OCI-LY7 (cell line): ENCODE measurements at regions of chr18 and their contacts with region 1.

Region 1: GRCh38 chr18:55422456-55423180 is 165.4 kb downstream of the TCF4 start:
- DNase-seq: peak; percentile 67
- H3K4me3 ChIP-seq: peak overlapping the region; percentile 72
- H3K27ac ChIP-seq: peak overlapping the region; percentile 100
- H3K4me1 ChIP-seq: peaks cover 66% of the 10 kb centered on the region
- CTCF ChIP-seq: no peak

Region 2: DNA sequence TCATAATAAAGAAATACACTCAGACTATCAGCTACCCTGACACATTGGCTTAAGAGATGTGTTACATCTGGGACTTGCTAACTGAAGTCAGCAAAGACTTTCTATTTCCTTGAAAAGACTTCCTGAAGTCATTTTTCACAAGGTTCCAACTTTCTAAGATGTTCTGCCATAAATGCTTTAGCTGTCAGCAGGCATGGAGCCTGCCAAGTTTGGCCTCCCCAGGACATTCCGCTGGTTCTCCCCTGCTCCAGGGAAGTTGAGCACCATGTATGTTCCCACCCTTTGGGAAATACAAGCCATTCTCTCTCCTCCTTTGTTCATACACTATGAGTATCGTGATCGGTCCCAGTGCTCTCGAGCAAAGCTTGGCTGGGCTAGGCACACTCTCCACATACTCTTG is 260.7 kb before region 1 on chr18:
- CTCF ChIA-PET with region 1: no interaction called
- POLR2A ChIA-PET with region 1: no interaction called
- intact Hi-C with region 1: no loop called
- DNase-seq: no peak
- H3K4me3 ChIP-seq: no peak overlapping the region
- H3K27ac ChIP-seq: no peak overlapping the region
- H3K4me1 ChIP-seq: no peaks in the 10 kb centered on the region
- CTCF ChIP-seq: no peak

Region 3: GRCh38 chr18:55439056-55439455 is 16.4 kb after region 1 on chr18:
- CTCF ChIA-PET with region 1: interaction called, 10 read pairs
- POLR2A ChIA-PET with region 1: interaction called, 41 read pairs
- intact Hi-C with region 1: no loop called
- DNase-seq: no peak
- H3K4me3 ChIP-seq: no peak overlapping the region
- H3K27ac ChIP-seq: no peak overlapping the region
- H3K4me1 ChIP-seq: peaks cover 93% of the 10 kb centered on the region
- CTCF ChIP-seq: no peak

Region 4: GRCh38 chr18:55447672-55448018 is 25.0 kb after region 1 on chr18:
- CTCF ChIA-PET with region 1: interaction called, 10 read pairs
- POLR2A ChIA-PET with region 1: interaction called, 58 read pairs
- intact Hi-C with region 1: loop called (anchors 1 kb)
- DNase-seq: peak; percentile 30
- H3K4me3 ChIP-seq: peak overlapping the region; percentile 40
- H3K27ac ChIP-seq: peak overlapping the region; percentile 98
- H3K4me1 ChIP-seq: peaks cover 91% of the 10 kb centered on the region
- CTCF ChIP-seq: no peak

Region 5: GRCh38 chr18:55465313-55465712 is 42.7 kb after region 1 on chr18:
- CTCF ChIA-PET with region 1: no interaction called
- POLR2A ChIA-PET with region 1: interaction called, 3 read pairs
- intact Hi-C with region 1: loop called (anchors 5 kb)
- DNase-seq: peak; percentile 74
- H3K4me3 ChIP-seq: peak overlapping the region; percentile 46
- H3K27ac ChIP-seq: peak overlapping the region; percentile 77
- H3K4me1 ChIP-seq: peaks cover 50% of the 10 kb centered on the region
- CTCF ChIP-seq: no peak

Region 6: DNA sequence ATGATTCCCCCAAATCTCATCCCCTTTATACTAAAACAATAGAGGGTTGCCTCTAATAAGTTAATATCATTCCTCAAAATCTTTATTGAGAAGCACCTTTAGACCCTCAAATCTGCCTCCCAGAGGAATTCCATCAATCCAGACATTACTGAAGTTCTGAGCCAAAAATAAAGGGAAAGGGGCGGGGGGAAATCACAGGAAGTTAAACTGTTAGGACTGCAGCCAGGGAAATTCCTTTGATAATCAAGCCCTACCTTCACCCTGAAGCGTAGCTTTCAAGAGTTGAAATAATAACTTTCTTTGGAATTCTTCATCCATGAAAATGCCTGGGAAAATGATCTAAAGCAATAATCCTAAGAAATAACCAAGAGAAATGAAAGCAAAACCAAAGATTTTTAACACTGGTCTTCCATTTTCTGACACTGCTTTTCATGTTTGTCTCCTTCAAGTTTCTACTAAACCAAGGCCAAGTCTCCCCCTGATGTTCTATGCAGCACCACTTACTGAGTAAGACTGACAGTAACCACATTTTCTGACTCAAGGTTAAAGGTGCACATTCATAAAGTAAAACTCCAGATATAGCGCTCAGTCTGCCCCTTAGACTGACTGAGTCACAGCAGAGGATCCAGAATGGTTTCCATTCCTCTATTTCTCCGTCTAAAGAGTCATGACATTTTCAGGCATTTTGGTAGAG is 87.2 kb after region 1 on chr18:
- CTCF ChIA-PET with region 1: no interaction called
- POLR2A ChIA-PET with region 1: interaction called, 5 read pairs
- intact Hi-C with region 1: loop called (anchors 2 kb)
- DNase-seq: peak; percentile 53
- H3K4me3 ChIP-seq: peak overlapping the region; percentile 63
- H3K27ac ChIP-seq: peak overlapping the region; percentile 81
- H3K4me1 ChIP-seq: peaks cover 69% of the 10 kb centered on the region
- CTCF ChIP-seq: no peak

Region 7: DNA sequence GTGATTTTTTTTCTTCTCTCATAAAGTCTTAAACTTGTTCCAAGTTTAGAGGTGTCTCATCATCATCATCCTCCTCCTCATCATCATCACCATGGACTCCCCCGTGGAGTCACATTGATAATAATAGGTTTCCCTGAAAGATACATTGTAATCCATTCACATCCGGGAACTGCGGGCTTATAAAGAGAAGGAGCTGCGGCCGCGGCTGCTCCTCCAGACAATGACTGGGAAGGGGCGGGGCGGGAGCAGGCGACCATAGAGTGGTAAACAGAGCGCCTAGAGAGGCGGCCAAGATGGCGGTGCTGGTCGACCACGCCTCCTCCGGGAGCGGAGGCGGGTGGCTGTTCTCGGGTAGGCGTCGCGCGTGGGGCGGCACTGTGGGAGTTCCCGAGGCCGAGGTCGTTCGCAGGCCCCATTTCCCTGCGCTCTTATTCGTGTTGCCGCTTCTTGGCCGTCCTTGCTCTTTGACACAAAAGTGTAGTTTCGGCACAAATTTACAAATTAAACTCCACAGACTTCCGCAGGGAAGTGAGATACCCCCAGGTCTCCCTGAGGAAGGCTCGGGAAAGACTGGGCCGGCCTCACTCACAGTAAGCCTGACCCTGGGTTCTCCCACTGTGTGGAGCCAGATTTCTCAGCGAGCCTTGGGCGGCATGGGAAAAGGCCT is 167.1 kb after region 1 on chr18:
- CTCF ChIA-PET with region 1: no interaction called
- POLR2A ChIA-PET with region 1: interaction called, 4 read pairs
- intact Hi-C with region 1: loop called (anchors 1 kb)
- DNase-seq: peak; percentile 89
- H3K4me3 ChIP-seq: peak overlapping the region; percentile 90
- H3K27ac ChIP-seq: peak overlapping the region; percentile 93
- H3K4me1 ChIP-seq: peaks cover 15% of the 10 kb centered on the region
- CTCF ChIP-seq: no peak